ENCODE measurements at regions of chr10 and their contacts with region 1.

Region 1: GRCh38 chr10:116287906-116288501 is 15.0 kb upstream of the GFRA1 start:
- DNase-seq: peak in 2 of 3 donors; percentile 27 to 45
- ATAC-seq: peak; percentile 41 to 56
- H3K4me3 ChIP-seq: no peak overlapping the region
- H3K27ac ChIP-seq: no peak overlapping the region
- H3K4me1 ChIP-seq: no peaks in the 10 kb centered on the region
- H3K27me3 ChIP-seq: no peaks in the 10 kb centered on the region

Region 2: DNA sequence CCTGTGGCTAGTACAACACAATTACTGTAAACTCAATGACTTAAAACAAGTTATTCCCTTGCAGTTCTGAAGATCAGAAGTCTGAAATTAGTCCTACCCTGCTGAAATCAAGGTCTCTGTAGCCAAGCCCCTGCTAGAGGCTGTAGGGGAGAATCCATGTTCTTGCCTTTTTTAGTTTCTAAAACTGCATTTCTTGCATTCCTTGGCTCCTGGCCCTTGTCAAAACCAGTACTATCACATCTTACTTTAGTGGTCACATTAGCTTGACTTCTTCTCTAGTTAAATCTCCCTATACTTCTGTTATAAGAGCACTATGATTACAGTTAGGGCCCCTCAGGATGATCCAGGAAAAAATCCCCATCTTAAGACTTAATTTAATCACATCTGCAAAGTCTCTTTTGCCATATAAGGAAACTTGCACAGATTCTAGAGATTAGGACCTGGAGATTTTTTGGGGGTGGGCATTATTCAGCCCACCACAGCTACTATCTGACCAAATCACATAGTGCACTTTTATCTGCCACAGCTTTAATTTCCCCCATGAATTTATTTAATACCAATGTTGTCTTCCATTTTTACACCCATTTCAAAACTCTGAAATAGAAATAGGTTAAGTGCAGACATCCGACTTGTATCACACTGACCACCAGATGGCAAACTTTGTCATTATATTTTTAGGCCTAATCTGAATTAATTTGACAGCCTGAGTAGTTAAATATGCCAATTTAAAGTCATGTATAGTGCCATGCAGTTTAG is 581.8 kb before region 1 on chr10:
- intact Hi-C with region 1: loop called in 1 of 4 experiments (anchors 10 kb)
- DNase-seq: no peak
- ATAC-seq: no peak
- H3K4me3 ChIP-seq: no peak overlapping the region
- H3K27ac ChIP-seq: no peak overlapping the region
- H3K4me1 ChIP-seq: no peaks in the 10 kb centered on the region
- H3K27me3 ChIP-seq: no peaks in the 10 kb centered on the region

Region 3: DNA sequence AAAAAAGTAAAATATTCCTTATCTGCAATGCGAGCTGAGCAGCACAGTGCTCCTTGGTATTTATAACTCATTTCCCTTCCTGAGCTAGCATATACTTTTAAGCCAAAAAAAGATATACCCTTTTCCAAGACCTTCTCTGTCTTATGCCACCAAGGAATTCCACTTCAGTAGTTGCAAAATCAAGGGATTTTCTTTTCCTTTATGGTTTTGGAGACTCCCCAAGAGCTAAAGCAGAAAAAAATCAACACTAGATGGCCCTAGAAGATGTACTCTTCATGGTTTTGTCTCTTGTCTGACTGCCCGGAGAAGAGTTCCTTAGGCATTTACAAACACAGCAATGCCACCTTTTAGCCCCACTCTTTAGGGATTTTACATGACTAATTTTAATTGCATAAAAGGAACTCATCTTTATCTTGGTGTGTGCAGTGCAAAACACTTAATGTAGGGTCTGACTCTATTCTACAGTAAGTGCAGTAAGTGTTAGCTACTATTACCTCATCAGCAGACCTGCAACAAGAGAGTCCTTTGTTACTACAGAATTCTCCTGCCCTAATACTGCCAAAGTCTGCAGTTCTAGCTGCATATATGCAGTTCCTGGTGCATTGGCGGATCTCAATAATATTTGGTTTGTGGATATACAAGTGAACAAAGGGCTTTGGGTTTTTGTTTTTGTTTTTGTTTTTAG is 458.3 kb before region 1 on chr10:
- intact Hi-C with region 1: loop called in 2 of 4 experiments (anchors 10 kb)
- DNase-seq: no peak
- ATAC-seq: peak; percentile 25 to 57
- H3K4me3 ChIP-seq: no peak overlapping the region
- H3K27ac ChIP-seq: no peak overlapping the region
- H3K4me1 ChIP-seq: no peaks in the 10 kb centered on the region
- H3K27me3 ChIP-seq: no peaks in the 10 kb centered on the region

Region 4: GRCh38 chr10:115948465-115948864 is 339.5 kb before region 1 on chr10:
- intact Hi-C with region 1: loop called in 2 of 4 experiments (anchors 5 to 10 kb)
- DNase-seq: no peak
- ATAC-seq: peak; percentile 39 to 64
- H3K4me3 ChIP-seq: no peak overlapping the region
- H3K27ac ChIP-seq: no peak overlapping the region
- H3K4me1 ChIP-seq: peaks cover 1% of the 10 kb centered on the region
- H3K27me3 ChIP-seq: no peaks in the 10 kb centered on the region

Region 5: GRCh38 chr10:116183733-116184511 is 104.1 kb before region 1 on chr10:
- intact Hi-C with region 1: no loop called
- DNase-seq: no peak
- ATAC-seq: peak in 1 of 2 donors; percentile 49
- H3K4me3 ChIP-seq: no peak overlapping the region
- H3K27ac ChIP-seq: no peak overlapping the region
- H3K4me1 ChIP-seq: no peaks in the 10 kb centered on the region
- H3K27me3 ChIP-seq: no peaks in the 10 kb centered on the region

Region 6: GRCh38 chr10:116408719-116409118 is 120.7 kb after region 1 on chr10:
- intact Hi-C with region 1: no loop called
- DNase-seq: no peak
- ATAC-seq: no peak
- H3K4me3 ChIP-seq: no peak overlapping the region
- H3K27ac ChIP-seq: no peak overlapping the region
- H3K4me1 ChIP-seq: no peaks in the 10 kb centered on the region
- H3K27me3 ChIP-seq: no peaks in the 10 kb centered on the region